Colonic mucosa (tissue), 4 donors: ENCODE measurements at regions of chr5 and their contacts with region 1.

Region 1: GRCh38 chr5:128669803-128670202 is 131.8 kb upstream of the FBN2 start:
- DNase-seq: no peak
- H3K4me3 ChIP-seq: no peak overlapping the region
- H3K27ac ChIP-seq: no peak overlapping the region
- H3K4me1 ChIP-seq: no peaks in the 10 kb centered on the region
- H3K27me3 ChIP-seq: no peaks in the 10 kb centered on the region
- CTCF ChIP-seq: no peak

Region 2: GRCh38 chr5:128844354-128844923 is 174.6 kb after region 1 on chr5:
- intact Hi-C with region 1: loop called (anchors 2 kb)
- DNase-seq: no peak
- H3K4me3 ChIP-seq: no peak overlapping the region
- H3K27ac ChIP-seq: no peak overlapping the region
- H3K4me1 ChIP-seq: no peaks in the 10 kb centered on the region
- H3K27me3 ChIP-seq: no peaks in the 10 kb centered on the region
- CTCF ChIP-seq: peak; percentile 26